A673 (cell line): ENCODE measurements at regions of chr12 and their contacts with region 1.

Region 1: GRCh38 chr12:92431146-92431545 is 271.6 kb upstream of the PLEKHG7 start:
- DNase-seq: no peak
- H3K4me3 ChIP-seq: no peak overlapping the region
- H3K27ac ChIP-seq: no peak overlapping the region
- H3K4me1 ChIP-seq: no peaks in the 10 kb centered on the region
- H3K27me3 ChIP-seq: no peaks in the 10 kb centered on the region
- CTCF ChIP-seq: no peak

Region 2: DNA sequence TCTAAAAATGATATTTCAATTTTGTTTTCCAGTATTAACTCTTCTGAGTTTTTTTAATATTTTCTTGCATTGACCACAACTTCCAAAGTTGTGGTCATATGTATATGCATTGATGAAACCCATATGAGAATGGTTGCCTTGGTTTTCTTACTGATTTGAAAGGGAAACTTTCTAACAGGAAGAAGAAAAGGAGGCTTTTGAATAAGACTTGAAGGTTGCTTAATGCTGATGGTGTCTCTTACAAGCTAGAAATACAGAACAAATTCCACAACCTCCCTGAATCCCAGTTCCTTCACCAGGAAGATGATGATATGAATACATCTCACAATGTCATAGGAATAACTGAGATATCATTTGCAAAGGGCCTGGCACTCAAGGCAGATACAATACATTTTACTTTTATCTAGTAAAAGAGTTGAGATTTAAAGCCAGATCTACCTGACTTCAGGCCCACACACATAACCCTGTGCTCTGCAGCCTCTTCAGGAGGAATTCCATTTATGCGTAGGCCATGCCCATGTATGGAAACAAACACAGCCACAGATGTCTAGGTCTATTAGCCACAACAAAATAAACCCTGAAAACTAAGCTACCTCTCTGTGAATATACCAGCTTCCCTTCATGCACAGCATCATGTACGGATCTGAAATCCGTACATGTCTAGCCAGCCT is 106.3 kb after region 1 on chr12:
- CTCF ChIA-PET with region 1: no interaction called
- POLR2A ChIA-PET with region 1: interaction called, 10 read pairs
- intact Hi-C with region 1: no loop called
- DNase-seq: no peak
- H3K4me3 ChIP-seq: no peak overlapping the region
- H3K27ac ChIP-seq: no peak overlapping the region
- H3K4me1 ChIP-seq: peaks cover 10% of the 10 kb centered on the region
- H3K27me3 ChIP-seq: no peaks in the 10 kb centered on the region
- CTCF ChIP-seq: no peak

Region 3: DNA sequence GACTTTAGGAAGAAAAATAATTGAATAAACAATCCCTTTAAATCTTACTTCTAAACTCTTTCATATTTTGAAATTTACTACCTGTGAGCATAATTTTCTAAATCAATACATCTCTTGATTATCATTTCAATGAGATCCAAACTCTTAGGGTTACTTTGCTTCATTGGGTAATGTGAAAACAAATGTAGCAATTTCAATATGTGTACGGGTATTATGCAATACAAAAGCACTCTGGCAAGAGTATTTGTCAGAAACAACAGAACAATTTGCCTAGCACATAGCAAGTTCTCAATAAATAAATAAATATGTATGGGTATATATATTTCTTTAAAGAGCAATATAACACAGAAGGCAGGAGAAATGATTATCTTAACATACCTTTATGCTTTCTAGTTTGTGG is 348.8 kb after region 1 on chr12:
- CTCF ChIA-PET with region 1: no interaction called
- POLR2A ChIA-PET with region 1: no interaction called
- intact Hi-C with region 1: no loop called
- DNase-seq: no peak
- H3K4me3 ChIP-seq: no peak overlapping the region
- H3K27ac ChIP-seq: no peak overlapping the region
- H3K4me1 ChIP-seq: no peaks in the 10 kb centered on the region
- H3K27me3 ChIP-seq: no peaks in the 10 kb centered on the region
- CTCF ChIP-seq: no peak